ENCODE measurements at regions of chr7 and their contacts with region 1.

Region 1: GRCh38 chr7:2796358-2797352 is 47.5 kb downstream of the GNA12 start:
- DNase-seq: no peak
- H3K4me3 ChIP-seq: no peak overlapping the region
- H3K27ac ChIP-seq: peak overlapping the region in 1 of 2 donors; percentile 22
- H3K4me1 ChIP-seq: no peaks in the 10 kb centered on the region
- H3K27me3 ChIP-seq: no peaks in the 10 kb centered on the region
- CTCF ChIP-seq: no peak
- POLR2A ChIP-seq: no peak

Region 2: DNA sequence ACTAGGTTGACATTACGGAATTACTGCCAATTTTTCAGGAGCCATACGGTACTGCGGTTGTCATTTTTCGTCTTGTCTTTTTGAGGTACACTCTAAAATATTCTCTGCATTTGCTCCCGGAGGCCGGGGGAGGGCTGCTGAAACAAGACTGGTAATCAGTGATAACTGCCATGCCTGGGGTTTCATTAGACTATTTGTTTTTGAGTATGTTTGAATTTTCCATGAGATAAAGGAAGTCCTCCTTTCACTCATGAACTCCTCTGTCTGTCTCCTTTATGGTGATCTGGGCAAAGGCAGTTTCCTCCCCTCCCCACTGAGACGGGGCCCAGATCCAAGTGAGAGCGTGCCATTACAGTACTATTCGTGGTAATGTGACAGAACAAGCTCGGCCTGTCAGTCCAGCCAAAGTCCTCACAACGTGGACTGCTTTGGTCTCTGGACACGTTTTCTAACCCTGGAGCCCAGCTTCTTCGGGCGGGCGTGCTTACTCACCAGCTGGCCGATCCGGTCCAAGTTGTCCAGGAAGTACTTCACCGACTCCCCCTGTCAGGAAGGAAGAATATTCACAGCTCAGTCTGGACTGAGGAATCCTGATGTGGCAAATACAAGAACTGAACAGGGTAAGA is 63.6 kb before region 1 on chr7:
- intact Hi-C with region 1: loop called (anchors 5 kb)
- DNase-seq: peak; percentile 89
- H3K4me3 ChIP-seq: no peak overlapping the region
- H3K27ac ChIP-seq: peak overlapping the region; percentile 31 to 43
- H3K4me1 ChIP-seq: peaks cover 10% of the 10 kb centered on the region
- H3K27me3 ChIP-seq: no peaks in the 10 kb centered on the region
- CTCF ChIP-seq: peak in 1 of 4 experiments; percentile 16
- POLR2A ChIP-seq: no peak

Region 3: GRCh38 chr7:2763597-2763996 is 33.1 kb before region 1 on chr7:
- intact Hi-C with region 1: loop called (anchors 2 kb)
- DNase-seq: no peak
- H3K4me3 ChIP-seq: no peak overlapping the region
- H3K27ac ChIP-seq: peak overlapping the region; percentile 27 to 52
- H3K4me1 ChIP-seq: no peaks in the 10 kb centered on the region
- H3K27me3 ChIP-seq: no peaks in the 10 kb centered on the region
- CTCF ChIP-seq: no peak
- POLR2A ChIP-seq: no peak